Activated CD4-positive, alpha-beta memory T cell treated with anti-CD3 and anti-CD28 coated beads for 36 hours (primary cell): ENCODE measurements at regions of chr1 and their contacts with region 1.

Region 1: DNA sequence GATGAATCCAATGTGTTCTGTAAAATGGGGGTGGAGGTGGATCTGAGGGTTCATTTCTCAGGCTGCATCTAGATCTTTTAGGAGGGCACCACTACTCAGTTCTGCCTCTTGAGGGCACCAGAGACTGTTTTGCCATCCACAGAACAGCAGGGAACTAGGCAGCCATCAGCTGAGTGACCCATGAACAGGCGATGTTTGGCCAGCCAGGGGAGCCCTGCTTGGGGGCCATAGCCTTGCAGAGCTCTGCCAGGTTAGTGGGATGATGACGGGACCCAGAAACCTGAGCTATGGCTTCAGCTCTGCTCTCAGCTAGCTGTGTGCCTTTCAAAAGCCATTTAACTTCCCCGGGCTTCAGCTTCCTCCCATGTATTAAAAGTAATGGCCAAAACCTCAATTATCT is 13.4 kb upstream of the NOS1AP start:
- DNase-seq: peak; percentile 63
- H3K4me3 Mint-ChIP-seq: no peak overlapping the region
- H3K27ac Mint-ChIP-seq: no peak overlapping the region
- H3K4me1 Mint-ChIP-seq: no peaks in the 10 kb centered on the region
- H3K27me3 Mint-ChIP-seq: peaks cover 9% of the 10 kb centered on the region

Region 2: DNA sequence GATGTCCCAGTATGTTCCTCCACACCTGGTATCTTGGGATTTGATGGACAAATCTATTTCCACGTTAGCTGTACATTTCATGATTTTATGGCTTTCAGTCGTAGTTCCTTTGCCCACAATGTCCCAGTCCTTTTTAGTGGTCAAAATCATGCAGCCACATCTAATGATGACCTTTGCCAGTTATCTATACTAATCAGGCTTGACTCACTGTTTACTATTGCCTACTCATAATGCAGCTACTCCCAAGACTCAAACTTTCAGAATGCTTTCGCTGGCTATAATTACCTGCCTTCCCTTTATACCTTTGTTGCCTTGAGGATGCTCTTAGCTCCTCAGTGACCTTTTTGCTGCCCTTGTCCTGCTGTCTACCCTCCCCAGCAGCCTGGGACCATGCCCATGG is 19.8 kb after region 1 on chr1:
- CTCF ChIA-PET with region 1: no interaction called
- POLR2A ChIA-PET with region 1: no interaction called
- intact Hi-C with region 1: no loop called
- DNase-seq: no peak
- H3K4me3 Mint-ChIP-seq: no peak overlapping the region
- H3K27ac Mint-ChIP-seq: no peak overlapping the region
- H3K4me1 Mint-ChIP-seq: peaks cover 2% of the 10 kb centered on the region
- H3K27me3 Mint-ChIP-seq: peaks cover 45% of the 10 kb centered on the region

Region 3: DNA sequence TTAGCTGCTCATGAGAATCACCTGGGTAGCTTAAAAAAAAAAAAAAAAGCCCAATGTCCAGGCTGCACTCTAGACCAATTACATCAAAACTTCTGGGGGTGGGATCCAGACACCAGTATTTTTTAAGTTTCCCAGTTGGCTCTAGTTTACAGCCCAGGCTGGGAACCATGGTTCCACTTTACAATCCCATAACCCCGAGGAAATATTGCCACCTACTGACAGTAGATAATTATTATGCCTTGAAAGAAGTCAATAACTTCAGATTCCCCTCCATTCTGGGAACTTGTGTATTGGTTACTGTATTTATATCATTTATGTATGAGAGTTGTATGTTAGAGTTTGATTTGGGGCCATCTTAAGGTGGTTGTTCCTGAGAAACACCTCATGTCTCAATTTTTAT is 220.4 kb after region 1 on chr1:
- CTCF ChIA-PET with region 1: interaction called, 4 read pairs
- POLR2A ChIA-PET with region 1: no interaction called
- intact Hi-C with region 1: loop called (anchors 1 kb)
- DNase-seq: no peak
- H3K4me3 Mint-ChIP-seq: no peak overlapping the region
- H3K27ac Mint-ChIP-seq: no peak overlapping the region
- H3K4me1 Mint-ChIP-seq: no peaks in the 10 kb centered on the region
- H3K27me3 Mint-ChIP-seq: peaks cover 6% of the 10 kb centered on the region

Region 4: DNA sequence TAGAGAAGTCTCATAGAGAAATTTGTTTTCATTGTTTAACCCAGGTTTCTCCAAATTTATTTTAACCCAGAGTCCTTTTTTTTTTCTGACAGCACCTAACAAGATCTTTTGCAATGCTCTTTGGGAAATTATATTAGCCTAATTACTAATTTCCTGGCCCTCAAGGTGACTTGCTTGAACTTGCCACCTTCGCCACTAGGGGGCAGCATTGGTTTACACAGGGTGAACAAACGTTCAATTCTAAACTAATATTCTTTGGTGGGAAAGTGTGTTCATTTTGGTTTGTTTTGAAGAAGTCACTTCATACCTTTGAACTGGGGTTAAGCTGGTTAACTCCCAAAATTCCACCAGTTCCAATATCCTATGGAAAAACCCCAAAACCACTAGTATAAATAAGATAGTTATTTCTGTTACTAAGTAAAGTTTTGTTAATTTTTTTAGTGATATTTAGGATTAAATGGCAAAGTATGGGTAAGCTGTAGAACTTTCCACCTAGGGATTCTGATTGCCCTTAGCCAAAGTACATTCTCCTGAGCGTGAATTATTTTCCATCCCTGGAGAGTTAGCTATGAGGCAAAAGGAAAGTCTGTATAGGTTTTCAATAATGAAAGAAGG is 791.9 kb after region 1 on chr1:
- CTCF ChIA-PET with region 1: interaction called, 3 read pairs
- POLR2A ChIA-PET with region 1: no interaction called
- intact Hi-C with region 1: loop called (anchors 5 kb)
- DNase-seq: peak; percentile 80
- H3K4me3 Mint-ChIP-seq: no peak overlapping the region
- H3K27ac Mint-ChIP-seq: no peak overlapping the region
- H3K4me1 Mint-ChIP-seq: no peaks in the 10 kb centered on the region
- H3K27me3 Mint-ChIP-seq: peaks cover 1% of the 10 kb centered on the region